Spleen (tissue), 13 donors: ENCODE measurements at regions of chr7 and their contacts with region 1.

Region 1: DNA sequence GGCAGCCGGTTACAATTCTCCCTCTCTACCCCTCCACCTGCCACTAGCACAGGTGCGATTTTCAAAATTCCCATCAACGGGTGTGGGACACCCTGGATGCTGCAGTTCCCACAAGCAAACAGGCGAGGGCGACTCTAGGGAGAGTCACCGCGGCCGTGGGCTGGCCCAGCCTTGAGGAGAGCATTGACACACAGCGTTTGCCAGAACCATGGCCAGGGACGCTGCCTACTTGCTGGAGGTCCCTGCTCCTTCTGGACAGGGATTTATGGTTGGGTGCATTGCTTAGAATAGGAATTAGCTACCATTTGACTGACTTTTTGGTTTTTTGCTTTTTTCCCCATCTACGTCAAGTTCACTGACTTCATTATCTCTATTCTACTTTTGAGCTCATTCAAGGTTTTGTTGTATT is 19.0 kb upstream of the CLDN4 start:
- DNase-seq: peak; percentile 86
- H3K4me3 ChIP-seq: no peak overlapping the region
- H3K27ac ChIP-seq: no peak overlapping the region
- H3K4me1 ChIP-seq: no peaks in the 10 kb centered on the region
- H3K27me3 ChIP-seq: peaks cover 0 to 24% (median 3%) of the 10 kb centered on the region in 7 donors
- CTCF ChIP-seq: peak; percentile 66 to 87 (median 79)
- POLR2A ChIP-seq: no peak

Region 2: DNA sequence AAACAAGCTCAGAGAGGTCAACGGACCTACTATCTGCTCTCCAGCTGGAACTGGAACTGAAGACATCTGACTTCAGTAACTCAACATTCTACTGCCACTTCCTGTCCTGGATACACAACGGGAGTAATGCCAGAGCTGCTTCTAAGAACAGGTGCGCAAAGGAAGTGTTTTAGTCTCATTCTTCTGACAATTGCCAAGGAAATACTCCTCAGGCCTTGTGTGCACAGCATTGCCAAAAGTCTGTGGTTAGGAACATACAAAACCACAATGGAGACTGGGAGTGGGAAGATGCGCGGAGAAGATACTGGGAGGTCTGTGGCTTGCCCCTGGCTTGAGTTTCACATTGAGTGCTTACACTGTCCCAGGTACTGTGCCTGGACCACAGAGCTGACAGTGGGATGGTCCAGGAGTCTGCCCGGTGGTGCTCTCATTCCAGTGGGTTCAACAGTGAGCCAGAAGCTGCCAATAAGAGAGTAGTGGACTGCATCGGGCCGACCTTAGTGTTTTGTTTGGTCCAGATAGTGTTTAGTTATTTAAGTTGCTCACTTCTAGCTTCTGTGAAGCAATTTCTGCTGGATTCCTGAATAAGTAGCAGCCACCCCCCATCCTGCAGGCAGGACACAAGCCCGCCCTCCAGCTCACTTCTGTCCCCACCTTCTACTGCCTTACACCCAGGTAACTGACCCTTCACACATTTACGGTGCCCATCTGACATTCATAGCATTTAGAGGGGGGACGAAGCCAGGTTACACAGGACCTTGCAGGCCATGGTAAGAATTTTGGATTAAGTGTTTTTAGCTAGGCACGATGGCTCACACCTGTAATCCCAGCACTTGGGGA is 243.7 kb before region 1 on chr7:
- intact Hi-C with region 1: no loop called
- DNase-seq: peak; percentile 16
- H3K4me3 ChIP-seq: no peak overlapping the region
- H3K27ac ChIP-seq: peak overlapping the region in 1 of 8 donors; percentile 24
- H3K4me1 ChIP-seq: peaks cover 0 to 15% (median 9%) of the 10 kb centered on the region in 6 donors
- H3K27me3 ChIP-seq: no peaks in the 10 kb centered on the region
- CTCF ChIP-seq: no peak
- POLR2A ChIP-seq: no peak

Region 3: DNA sequence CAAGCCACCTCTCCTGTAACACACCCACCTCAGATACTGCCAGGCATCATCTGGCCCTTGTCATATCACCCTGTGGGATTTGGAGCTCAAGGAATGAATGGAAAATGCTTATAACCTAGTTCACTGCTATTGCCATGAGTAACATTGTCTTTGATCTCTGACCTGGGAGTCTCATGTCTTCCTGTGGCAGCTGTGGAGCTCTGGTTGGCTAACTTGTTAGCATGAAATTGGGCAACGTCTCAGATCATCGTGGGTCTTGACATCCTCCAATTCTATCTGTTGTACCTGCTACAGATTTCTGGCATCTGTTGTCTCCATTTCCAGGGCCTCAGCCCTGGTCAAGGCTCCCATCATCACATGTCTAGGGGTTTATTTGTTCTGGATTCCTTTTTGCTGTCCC is 47.0 kb after region 1 on chr7:
- intact Hi-C with region 1: loop called (anchors 5 kb)
- DNase-seq: no peak
- H3K4me3 ChIP-seq: no peak overlapping the region
- H3K27ac ChIP-seq: no peak overlapping the region
- H3K4me1 ChIP-seq: peaks cover 7 to 10% (median 8%) of the 10 kb centered on the region in 6 donors
- H3K27me3 ChIP-seq: peaks cover 0 to 29% (median 0%) of the 10 kb centered on the region in 7 donors
- CTCF ChIP-seq: no peak
- POLR2A ChIP-seq: no peak

Region 4: GRCh38 chr7:74051629-74052410 is 240.1 kb after region 1 on chr7:
- intact Hi-C with region 1: no loop called
- DNase-seq: peak; percentile 63
- H3K4me3 ChIP-seq: no peak overlapping the region
- H3K27ac ChIP-seq: no peak overlapping the region
- H3K4me1 ChIP-seq: peaks cover 0 to 6% (median 0%) of the 10 kb centered on the region in 6 donors
- H3K27me3 ChIP-seq: peaks cover 0 to 3% (median 0%) of the 10 kb centered on the region in 7 donors
- CTCF ChIP-seq: no peak
- POLR2A ChIP-seq: no peak

Region 5: GRCh38 chr7:74070619-74070921 is 258.8 kb after region 1 on chr7:
- intact Hi-C with region 1: no loop called
- DNase-seq: peak; percentile 45
- H3K4me3 ChIP-seq: no peak overlapping the region
- H3K27ac ChIP-seq: no peak overlapping the region
- H3K4me1 ChIP-seq: peaks cover 0 to 11% (median 6%) of the 10 kb centered on the region in 6 donors
- H3K27me3 ChIP-seq: no peaks in the 10 kb centered on the region
- CTCF ChIP-seq: no peak
- POLR2A ChIP-seq: no peak